PC-3 (cell line): ENCODE measurements at regions of chr5 and their contacts with region 1.

Region 1: DNA sequence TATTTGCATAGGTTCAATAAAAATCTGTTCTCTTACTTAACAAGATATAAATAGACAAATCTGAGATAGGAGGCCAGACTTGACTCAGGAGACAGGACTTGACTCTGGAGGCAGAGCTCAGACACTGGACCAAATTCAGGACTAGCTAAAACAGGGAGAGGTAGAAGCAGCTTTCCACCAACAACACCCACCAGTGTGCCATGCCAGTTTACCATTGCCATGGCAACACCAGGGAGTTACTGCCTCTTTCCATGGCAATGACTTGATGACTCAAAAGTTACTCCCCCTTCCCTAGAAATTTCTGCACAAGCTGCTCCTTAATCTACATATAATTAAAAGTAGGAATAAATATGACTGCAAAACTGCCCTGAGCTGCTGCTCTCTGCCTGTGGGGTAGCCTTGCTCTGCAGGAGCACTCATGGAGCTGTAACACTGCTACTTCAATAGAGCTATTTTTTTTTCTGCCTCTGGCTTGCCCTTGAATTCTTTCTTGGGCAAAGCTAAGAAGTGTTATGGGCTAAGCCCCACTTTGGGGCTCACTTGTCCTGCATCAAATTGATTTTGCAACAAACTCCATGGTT is 473.0 kb downstream of the PLK2 start:
- DNase-seq: peak; percentile 39
- ATAC-seq: peak; percentile 61
- H3K4me3 ChIP-seq: no peak overlapping the region
- H3K27ac ChIP-seq: no peak overlapping the region
- H3K4me1 ChIP-seq: peaks cover 22% of the 10 kb centered on the region
- H3K27me3 ChIP-seq: no peaks in the 10 kb centered on the region
- CTCF ChIP-seq: no peak

Region 2: GRCh38 chr5:57692582-57693487 is 294.0 kb before region 1 on chr5:
- CTCF ChIA-PET with region 1: no interaction called
- POLR2A ChIA-PET with region 1: no interaction called
- intact Hi-C with region 1: no loop called
- DNase-seq: peak; percentile 85
- ATAC-seq: peak; percentile 98
- H3K4me3 ChIP-seq: no peak overlapping the region
- H3K27ac ChIP-seq: peak overlapping the region; percentile 92
- H3K4me1 ChIP-seq: peaks cover 19% of the 10 kb centered on the region
- H3K27me3 ChIP-seq: no peaks in the 10 kb centered on the region
- CTCF ChIP-seq: no peak

Region 3: DNA sequence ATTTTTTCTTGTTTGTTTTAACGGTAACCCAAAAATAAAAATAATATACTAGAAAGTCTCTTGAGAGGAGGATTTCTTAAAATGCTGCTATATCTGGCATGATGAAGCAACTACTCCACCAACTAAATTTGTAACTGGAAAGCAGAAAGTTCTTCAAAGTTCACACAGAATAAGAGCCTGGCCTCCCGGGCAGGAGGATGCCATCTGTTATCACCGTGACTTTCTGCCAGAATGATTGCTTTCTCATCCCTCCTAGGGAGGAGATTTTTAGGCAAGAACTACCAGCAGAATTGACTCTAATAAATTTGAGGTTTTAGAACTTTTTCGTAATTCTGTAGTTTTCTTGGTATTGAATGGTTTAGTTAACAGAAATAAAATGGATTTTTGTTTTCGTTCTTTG is 39.7 kb before region 1 on chr5:
- CTCF ChIA-PET with region 1: no interaction called
- POLR2A ChIA-PET with region 1: no interaction called
- intact Hi-C with region 1: loop called (anchors 5 kb)
- DNase-seq: no peak
- ATAC-seq: no peak
- H3K4me3 ChIP-seq: no peak overlapping the region
- H3K27ac ChIP-seq: no peak overlapping the region
- H3K4me1 ChIP-seq: peaks cover 5% of the 10 kb centered on the region; the same call in 1 of the 2 replicates
- H3K27me3 ChIP-seq: no peaks in the 10 kb centered on the region
- CTCF ChIP-seq: no peak

Region 4: DNA sequence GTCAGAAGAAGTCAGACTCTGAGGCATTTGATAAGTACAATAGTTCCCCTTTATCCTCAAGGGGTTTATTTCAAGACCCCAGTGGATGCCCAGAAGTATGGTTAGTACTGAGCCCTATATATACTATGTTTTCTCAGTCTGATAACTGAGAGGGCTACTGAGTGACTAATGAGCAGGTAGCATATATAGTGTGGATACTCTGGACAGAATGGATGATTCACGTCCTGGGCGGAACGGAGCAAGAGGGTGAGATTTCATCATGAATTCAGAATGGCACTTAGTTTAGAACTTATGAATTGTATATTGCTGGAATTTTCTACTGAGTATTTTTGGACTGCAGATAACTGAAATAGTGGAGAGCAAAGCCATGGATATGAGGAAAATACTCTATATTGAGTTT is 15.5 kb after region 1 on chr5:
- CTCF ChIA-PET with region 1: no interaction called
- POLR2A ChIA-PET with region 1: no interaction called
- intact Hi-C with region 1: no loop called
- DNase-seq: peak; percentile 77
- ATAC-seq: peak; percentile 100
- H3K4me3 ChIP-seq: no peak overlapping the region
- H3K27ac ChIP-seq: peak overlapping the region; percentile 43
- H3K4me1 ChIP-seq: peaks cover 21% of the 10 kb centered on the region; the same call in 1 of the 2 replicates
- H3K27me3 ChIP-seq: no peaks in the 10 kb centered on the region
- CTCF ChIP-seq: no peak